ENCODE measurements at regions of chr3 and their contacts with region 1.

Region 1: GRCh38 chr3:22555753-22556435 is 647.2 kb upstream of the UBE2E2 start:
- DNase-seq: no peak
- H3K4me3 ChIP-seq: no peak overlapping the region
- H3K27ac ChIP-seq: no peak overlapping the region
- H3K4me1 ChIP-seq: no peaks in the 10 kb centered on the region
- H3K27me3 ChIP-seq: no peaks in the 10 kb centered on the region
- CTCF ChIP-seq: no peak
- POLR2A ChIP-seq: no peak

Region 2: DNA sequence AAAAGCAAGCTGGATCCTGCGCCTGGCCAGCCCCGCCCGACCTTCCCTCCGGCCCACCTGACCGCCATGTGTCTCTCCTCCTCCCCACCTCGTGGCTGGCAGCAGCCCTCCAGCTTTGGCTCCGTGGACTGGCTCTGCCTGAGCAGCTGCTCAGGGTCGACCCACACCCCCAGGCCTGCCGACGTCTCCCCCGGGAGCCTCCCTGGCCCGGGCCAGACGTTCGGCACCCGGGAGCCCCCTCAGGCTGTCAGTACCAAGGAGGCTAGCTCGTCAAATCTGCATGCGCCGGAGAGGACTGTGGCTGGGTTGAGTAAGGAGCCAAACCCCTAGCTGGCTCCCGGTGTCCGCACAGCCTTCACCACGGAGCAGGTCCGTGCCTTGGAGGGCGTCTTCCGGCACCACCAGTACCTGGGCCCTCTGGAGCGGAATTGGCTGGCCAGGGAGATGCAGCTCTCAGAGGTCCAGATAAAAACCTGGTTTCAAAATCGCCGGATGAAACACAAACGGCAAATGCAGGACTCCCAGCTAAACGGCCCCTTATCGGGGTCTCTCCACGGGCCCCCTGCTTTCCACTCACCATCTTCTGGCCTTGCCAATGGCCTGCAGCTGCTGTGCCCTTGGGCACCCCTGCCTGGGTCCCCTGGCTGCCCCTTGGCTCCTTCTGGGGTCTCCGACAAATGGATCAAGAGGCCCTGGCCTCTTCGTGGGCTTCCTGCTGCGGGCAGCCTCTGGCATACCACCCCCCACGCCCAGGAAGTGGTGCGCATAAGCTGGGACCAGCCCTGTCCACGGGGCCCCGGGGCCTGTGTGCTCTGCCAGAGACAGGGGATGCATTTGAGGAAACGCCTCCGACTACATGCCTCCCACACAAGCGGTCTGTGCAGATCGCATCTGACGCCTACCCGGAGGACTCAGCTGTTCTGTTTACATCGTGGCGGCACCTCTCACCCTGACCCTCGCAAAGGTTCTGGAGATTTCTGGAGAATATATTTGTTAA is 1149.9 kb before region 1 on chr3:
- intact Hi-C with region 1: loop called (anchors 5 kb)
- DNase-seq: peak in 1 of 2 donors; percentile 47
- H3K4me3 ChIP-seq: no peak overlapping the region
- H3K27ac ChIP-seq: no peak overlapping the region
- H3K4me1 ChIP-seq: no peaks in the 10 kb centered on the region
- H3K27me3 ChIP-seq: no peaks in the 10 kb centered on the region
- CTCF ChIP-seq: no peak
- POLR2A ChIP-seq: no peak

Region 3: GRCh38 chr3:22089284-22089683 is 466.6 kb before region 1 on chr3:
- intact Hi-C with region 1: no loop called
- DNase-seq: no peak
- H3K4me3 ChIP-seq: no peak overlapping the region
- H3K27ac ChIP-seq: no peak overlapping the region
- H3K4me1 ChIP-seq: no peaks in the 10 kb centered on the region
- H3K27me3 ChIP-seq: no peaks in the 10 kb centered on the region
- CTCF ChIP-seq: peak in 2 of 3 donors; percentile 27 to 34
- POLR2A ChIP-seq: no peak

Region 4: DNA sequence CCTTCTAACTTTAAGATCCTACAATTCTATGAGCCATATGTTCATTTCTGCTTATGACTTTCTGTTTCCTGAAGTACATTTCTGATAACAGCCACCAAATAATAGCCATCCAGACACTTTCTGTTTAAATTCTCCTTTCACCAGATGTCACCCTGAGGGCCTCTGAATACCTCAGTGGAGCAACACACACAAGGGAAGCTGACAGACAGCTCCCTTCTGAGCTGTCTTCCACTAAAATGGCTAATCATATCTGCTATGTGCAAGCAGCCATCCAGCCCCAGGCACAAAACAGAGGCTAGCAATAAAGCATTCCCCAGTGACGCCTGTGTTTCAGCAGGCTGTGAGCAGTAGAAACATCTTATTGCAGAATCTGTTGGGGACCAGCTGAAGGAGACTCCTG is 19.4 kb before region 1 on chr3:
- intact Hi-C with region 1: no loop called
- DNase-seq: no peak
- H3K4me3 ChIP-seq: no peak overlapping the region
- H3K27ac ChIP-seq: no peak overlapping the region
- H3K4me1 ChIP-seq: no peaks in the 10 kb centered on the region
- H3K27me3 ChIP-seq: no peaks in the 10 kb centered on the region
- CTCF ChIP-seq: no peak
- POLR2A ChIP-seq: no peak